Ovary (tissue), 10 donors: ENCODE measurements at regions of chr13 and their contacts with region 1.

Region 1: DNA sequence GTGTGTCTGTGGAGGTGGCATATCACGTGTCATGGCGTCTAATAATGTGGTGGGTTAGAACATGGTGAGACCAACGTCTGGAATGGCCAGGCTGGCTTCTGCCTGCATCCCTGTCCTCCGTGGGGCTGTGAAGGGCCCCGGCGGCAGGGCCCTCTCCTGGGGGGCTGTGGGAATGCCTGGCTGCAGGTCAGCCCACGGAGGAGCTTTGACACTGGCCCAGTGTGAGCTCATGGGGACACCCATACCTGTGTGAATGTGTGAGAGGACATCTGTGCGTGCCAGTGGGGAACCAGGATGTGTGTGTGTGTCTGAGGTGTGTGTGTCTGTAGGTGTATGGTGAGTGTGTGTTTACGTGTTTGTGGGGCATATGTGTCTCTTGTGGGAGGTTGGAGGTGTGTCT is 300.1 kb downstream of the TEX29 start:
- DNase-seq: no peak
- H3K4me3 ChIP-seq: no peak overlapping the region
- H3K27ac ChIP-seq: no peak overlapping the region
- H3K4me1 ChIP-seq: no peaks in the 10 kb centered on the region
- H3K27me3 ChIP-seq: no peaks in the 10 kb centered on the region
- CTCF ChIP-seq: no peak
- EP300 ChIP-seq: no peak
- POLR2A ChIP-seq: no peak

Region 2: DNA sequence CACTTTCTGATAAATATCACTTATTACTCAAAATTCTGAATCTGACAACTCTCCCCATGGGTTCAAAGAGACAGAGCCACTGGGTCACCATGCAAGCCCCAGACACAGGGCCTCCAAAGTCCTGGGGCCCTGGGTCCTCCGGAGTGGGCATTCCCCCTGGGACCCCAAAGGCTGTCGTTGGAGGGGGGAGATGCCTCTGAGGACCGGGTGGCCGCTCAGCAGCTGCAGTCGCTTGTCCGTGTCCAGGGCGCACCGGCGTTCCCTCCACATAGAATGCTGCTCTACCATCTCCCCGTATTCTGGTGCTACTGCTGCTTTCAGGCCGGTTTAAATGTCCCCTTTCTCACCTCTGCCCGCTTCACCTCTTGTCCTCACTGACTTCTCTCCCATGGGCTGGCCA is 54.0 kb before region 1 on chr13:
- intact Hi-C with region 1: loop called in 1 of 4 experiments (anchors 2 kb)
- DNase-seq: no peak
- H3K4me3 ChIP-seq: no peak overlapping the region
- H3K27ac ChIP-seq: no peak overlapping the region
- H3K4me1 ChIP-seq: no peaks in the 10 kb centered on the region
- H3K27me3 ChIP-seq: no peaks in the 10 kb centered on the region
- CTCF ChIP-seq: no peak
- EP300 ChIP-seq: no peak
- POLR2A ChIP-seq: no peak